ENCODE measurements at regions of chr15 and their contacts with region 1.

Region 1: DNA sequence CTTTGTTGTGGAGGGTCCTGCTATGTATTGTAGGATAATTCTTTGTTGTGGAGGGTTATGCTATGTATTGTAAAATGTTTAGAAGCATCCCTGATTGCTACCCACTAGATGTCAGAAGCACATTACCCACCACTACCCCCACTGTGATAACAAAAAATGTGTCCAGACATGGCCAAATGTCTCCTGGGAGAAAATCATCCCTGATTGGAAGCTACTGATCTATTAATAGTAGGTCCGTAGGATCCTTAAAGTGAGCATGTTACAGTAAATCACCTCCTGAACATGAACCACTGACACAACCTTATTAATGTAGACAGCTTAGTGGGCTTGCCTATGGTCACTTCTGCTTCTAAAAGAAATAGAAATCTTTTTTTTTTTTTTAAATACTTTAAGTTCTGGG is 884.6 kb downstream of the AGBL1 start:
- H3K4me3 ChIP-seq: no peak overlapping the region
- H3K27ac ChIP-seq: no peak overlapping the region
- H3K4me1 ChIP-seq: no peaks in the 10 kb centered on the region
- CTCF ChIP-seq: no peak

Region 2: DNA sequence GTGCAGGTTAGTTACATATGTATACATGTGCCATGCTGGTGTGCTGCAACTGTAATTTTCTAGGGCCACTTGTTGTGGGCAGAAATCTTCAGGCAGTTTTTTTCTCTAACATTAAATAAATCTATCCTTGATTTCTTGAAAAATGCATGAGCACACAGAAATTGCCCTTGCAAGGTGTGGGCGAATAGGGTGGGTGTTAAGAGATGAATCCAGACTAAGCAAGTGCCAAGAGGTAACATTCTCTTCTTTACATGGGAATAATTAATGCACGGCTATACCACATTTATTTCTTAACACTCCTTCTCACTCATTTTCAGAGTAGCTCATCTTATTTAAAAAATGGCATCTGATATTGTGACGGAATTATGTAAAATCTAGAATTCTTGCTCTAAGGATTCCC is 165.0 kb before region 1 on chr15:
- CTCF ChIA-PET with region 1: interaction called, 10 read pairs
- POLR2A ChIA-PET with region 1: no interaction called
- H3K4me3 ChIP-seq: no peak overlapping the region
- H3K27ac ChIP-seq: no peak overlapping the region
- H3K4me1 ChIP-seq: no peaks in the 10 kb centered on the region
- CTCF ChIP-seq: no peak

Region 3: GRCh38 chr15:86988033-86988432 is 23.8 kb after region 1 on chr15:
- CTCF ChIA-PET with region 1: no interaction called
- POLR2A ChIA-PET with region 1: no interaction called
- H3K4me3 ChIP-seq: no peak overlapping the region
- H3K27ac ChIP-seq: no peak overlapping the region
- H3K4me1 ChIP-seq: no peaks in the 10 kb centered on the region
- CTCF ChIP-seq: no peak